Heart right ventricle (tissue), 16 donors: ENCODE measurements at regions of chr19 and their contacts with region 1.

Region 1: DNA sequence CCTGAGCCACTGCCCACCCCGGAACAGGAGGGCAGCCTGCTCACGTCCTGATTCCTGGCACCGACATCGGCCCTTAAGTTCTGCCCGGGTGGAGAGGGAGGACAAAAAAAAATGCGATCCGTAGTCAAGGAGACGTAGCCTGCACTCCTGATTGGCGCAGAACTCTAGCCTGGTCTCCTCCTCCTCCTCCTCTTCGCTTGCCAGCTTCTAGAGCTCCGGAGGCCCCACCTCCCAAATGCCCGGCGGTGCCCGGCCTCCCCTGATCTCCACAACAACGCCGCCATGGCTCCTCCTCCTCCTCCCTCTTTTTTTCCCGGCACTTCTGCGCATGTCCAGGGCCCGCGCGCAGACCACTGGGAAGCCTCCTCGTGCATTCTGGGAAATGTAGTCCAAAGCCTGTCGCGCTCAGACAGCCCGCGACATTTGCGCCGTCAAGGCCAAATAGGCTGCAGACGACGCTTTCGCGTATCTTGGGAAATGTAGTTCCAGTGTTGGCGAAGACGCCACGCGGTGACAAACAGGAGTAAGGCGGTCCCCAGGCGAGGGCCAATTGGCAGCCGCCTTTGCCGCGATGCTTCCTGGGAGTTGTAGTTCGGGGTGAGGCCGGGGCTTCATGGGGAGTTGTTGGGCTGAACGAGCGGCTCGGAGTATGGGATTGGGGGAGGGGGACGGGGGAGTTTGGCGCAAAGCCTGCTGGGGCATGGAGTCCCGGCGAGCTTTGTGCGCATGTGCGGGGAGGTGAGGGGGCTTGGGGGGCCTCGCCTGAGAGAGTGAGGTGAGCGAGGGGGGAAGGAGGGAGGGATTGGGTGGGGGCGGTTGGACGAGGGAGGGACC is at the start of gene ZNF444:
- DNase-seq: peak; percentile 99
- ATAC-seq: peak; percentile 93 to 97 (median 96)
- H3K4me3 ChIP-seq: peak within 1 kb of the TSS; percentile 36 to 70 (median 64)
- H3K27ac ChIP-seq: peak within 1 kb of the TSS; percentile 30 to 90 (median 86)
- H3K4me1 ChIP-seq: peaks cover 0 to 29% (median 17%) of the 10 kb centered on the region in 9 donors
- H3K27me3 ChIP-seq: no peaks in the 10 kb centered on the region
- CTCF ChIP-seq: no peak
- total RNA-seq, gene ZNF444: 15.1 to 25.1 (median 22.2) TPM

Region 2: GRCh38 chr19:55674841-55675660 is 465.7 kb before region 1 on chr19 and contains the start of gene EPN1:
- intact Hi-C with region 1: no loop called
- DNase-seq: peak; percentile 97 to 98
- ATAC-seq: peak; percentile 88 to 95 (median 93)
- H3K4me3 ChIP-seq: peak within 1 kb of the TSS; percentile 39 to 97 (median 79)
- H3K27ac ChIP-seq: peak within 1 kb of the TSS; percentile 88 to 97 (median 95)
- H3K4me1 ChIP-seq: peaks cover 13 to 64% (median 52%) of the 10 kb centered on the region in 9 donors
- H3K27me3 ChIP-seq: no peaks in the 10 kb centered on the region
- CTCF ChIP-seq: no peak
- total RNA-seq, gene EPN1: 127 to 305 (median 140) TPM

Region 3: DNA sequence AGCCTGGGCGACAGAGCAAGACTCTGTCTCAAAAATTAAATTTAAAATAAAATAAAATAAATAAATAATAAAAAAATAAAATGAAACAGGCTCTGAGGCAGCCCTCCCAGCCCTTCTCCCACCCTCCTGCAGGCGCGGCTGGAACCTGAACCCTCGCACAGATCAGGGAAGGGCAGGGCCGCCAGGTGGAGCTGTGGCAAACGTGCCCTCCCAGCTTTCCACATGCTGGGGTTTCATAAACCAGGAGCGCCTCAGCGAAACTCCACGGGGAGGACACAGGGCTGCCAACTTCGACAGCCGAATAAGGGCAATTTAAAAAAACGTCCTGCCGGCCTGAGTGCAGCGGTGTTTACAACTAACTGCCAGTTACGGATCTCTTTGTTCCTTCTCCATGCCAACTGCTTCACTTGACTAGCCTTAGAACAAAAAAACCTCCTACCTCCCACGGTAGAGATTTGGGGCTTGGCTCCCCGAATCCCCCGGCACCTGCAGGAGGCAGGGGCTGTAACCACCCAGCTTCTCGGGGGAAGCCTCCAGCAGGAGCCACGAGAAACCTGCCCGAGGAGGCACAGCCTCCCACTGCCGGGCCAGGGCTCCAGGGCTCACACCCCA is 35.6 kb before region 1 on chr19:
- intact Hi-C with region 1: loop called in 2 of 10 experiments (anchors 5 kb)
- DNase-seq: peak; percentile 51 to 69
- ATAC-seq: peak; percentile 56 to 78 (median 74)
- H3K4me3 ChIP-seq: no peak overlapping the region
- H3K27ac ChIP-seq: peak overlapping the region in 5 of 10 donors; percentile 3 to 53 (median 20)
- H3K4me1 ChIP-seq: peaks cover 14 to 61% (median 44%) of the 10 kb centered on the region in 9 donors
- H3K27me3 ChIP-seq: no peaks in the 10 kb centered on the region
- CTCF ChIP-seq: peak; percentile 51 to 79 (median 73)

Region 4: GRCh38 chr19:56121180-56122167 is 19.3 kb before region 1 on chr19 and contains the start of gene ZNF787:
- intact Hi-C with region 1: loop called in 5 of 10 experiments (anchors 1 kb)
- DNase-seq: peak; percentile 97 to 99
- ATAC-seq: peak; percentile 91 to 97 (median 96)
- H3K4me3 ChIP-seq: peak within 1 kb of the TSS; percentile 63 to 93 (median 83)
- H3K27ac ChIP-seq: peak within 1 kb of the TSS; percentile 94 to 100 (median 96)
- H3K4me1 ChIP-seq: peaks cover 18 to 45% (median 38%) of the 10 kb centered on the region in 9 donors
- H3K27me3 ChIP-seq: no peaks in the 10 kb centered on the region
- CTCF ChIP-seq: peak in 1 of 9 donors; percentile 21
- total RNA-seq, gene ZNF787: 18.5 to 47.2 (median 25.7) TPM

Region 5: GRCh38 chr19:56193981-56194640 is 53.3 kb after region 1 on chr19:
- intact Hi-C with region 1: no loop called
- DNase-seq: no peak
- ATAC-seq: no peak
- H3K4me3 ChIP-seq: no peak overlapping the region
- H3K27ac ChIP-seq: no peak overlapping the region
- H3K4me1 ChIP-seq: no peaks in the 10 kb centered on the region
- H3K27me3 ChIP-seq: peaks cover 0 to 2% (median 0%) of the 10 kb centered on the region in 7 donors
- CTCF ChIP-seq: no peak

Region 6: GRCh38 chr19:56314562-56315077 is 173.8 kb after region 1 on chr19 and contains the start of gene ZSCAN5A:
- intact Hi-C with region 1: loop called in 3 of 10 experiments (anchors 2 to 10 kb)
- DNase-seq: peak; percentile 97 to 99
- ATAC-seq: peak; percentile 91 to 97 (median 95)
- H3K4me3 ChIP-seq: peak within 1 kb of the TSS; percentile 40 to 83 (median 72)
- H3K27ac ChIP-seq: peak within 1 kb of the TSS; percentile 71 to 99 (median 96)
- H3K4me1 ChIP-seq: peaks cover 0 to 49% (median 18%) of the 10 kb centered on the region in 9 donors
- H3K27me3 ChIP-seq: no peaks in the 10 kb centered on the region
- CTCF ChIP-seq: no peak
- total RNA-seq, gene ZSCAN5A: 17.7 to 33.4 (median 21.4) TPM